Heart right ventricle (tissue), 16 donors: ENCODE measurements at regions of chr1 and their contacts with region 1.

Region 1: GRCh38 chr1:147833231-147833840 is 69.3 kb upstream of the GJA8 start:
- DNase-seq: no peak
- ATAC-seq: no peak
- H3K4me3 ChIP-seq: no peak overlapping the region
- H3K27ac ChIP-seq: no peak overlapping the region
- H3K4me1 ChIP-seq: no peaks in the 10 kb centered on the region
- H3K27me3 ChIP-seq: no peaks in the 10 kb centered on the region
- CTCF ChIP-seq: no peak

Region 2: GRCh38 chr1:147651213-147651865 is 182.0 kb before region 1 on chr1:
- intact Hi-C with region 1: no loop called
- DNase-seq: no peak
- ATAC-seq: no peak
- H3K4me3 ChIP-seq: no peak overlapping the region
- H3K27ac ChIP-seq: no peak overlapping the region
- H3K4me1 ChIP-seq: peaks cover 0 to 7% (median 0%) of the 10 kb centered on the region in 9 donors
- H3K27me3 ChIP-seq: no peaks in the 10 kb centered on the region
- CTCF ChIP-seq: no peak

Region 3: DNA sequence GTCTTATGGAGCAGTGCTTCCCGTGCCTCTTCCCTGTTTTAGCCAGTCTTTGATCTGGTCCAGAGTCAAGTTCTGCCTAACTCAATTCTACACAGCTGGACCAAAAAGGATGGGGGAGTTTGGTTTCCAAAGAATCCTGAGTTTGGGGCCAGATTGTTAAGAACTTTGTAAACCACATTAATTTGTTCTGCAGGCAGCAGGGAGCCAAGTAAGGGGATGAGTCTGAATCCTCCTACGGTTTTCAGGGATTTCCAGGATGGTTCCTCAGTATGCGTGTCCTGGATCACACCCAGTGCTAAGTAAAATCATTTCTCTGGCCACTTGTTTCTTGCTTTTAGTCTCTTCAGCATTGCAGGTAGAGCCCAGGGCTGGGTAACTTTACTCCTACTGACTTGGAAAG is 46.8 kb before region 1 on chr1:
- intact Hi-C with region 1: loop called in 1 of 10 experiments (anchors 5 kb)
- DNase-seq: no peak
- ATAC-seq: no peak
- H3K4me3 ChIP-seq: no peak overlapping the region
- H3K27ac ChIP-seq: no peak overlapping the region
- H3K4me1 ChIP-seq: peaks cover 0 to 13% (median 2%) of the 10 kb centered on the region in 9 donors
- H3K27me3 ChIP-seq: peaks cover 0 to 6% (median 0%) of the 10 kb centered on the region in 7 donors
- CTCF ChIP-seq: no peak

Region 4: DNA sequence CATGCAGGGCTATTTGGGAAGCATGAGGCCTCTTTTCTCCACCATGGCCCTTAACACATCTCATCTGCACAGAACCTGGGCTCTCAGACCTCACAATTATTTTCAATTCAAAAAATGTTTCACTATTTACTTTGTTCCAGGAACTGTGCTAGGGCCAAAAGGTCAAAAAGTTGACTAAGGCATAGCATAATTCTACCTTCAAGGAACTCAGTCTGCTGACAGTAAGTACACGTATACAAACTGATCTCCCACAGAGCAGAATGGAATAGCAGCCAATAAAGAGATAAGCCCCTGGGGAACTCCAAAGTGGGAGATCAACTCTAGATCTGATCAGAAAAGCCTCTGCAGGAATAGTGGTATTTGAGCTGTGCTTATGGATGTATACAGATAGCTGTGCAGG is 35.6 kb after region 1 on chr1:
- intact Hi-C with region 1: loop called in 1 of 10 experiments (anchors 2 kb)
- DNase-seq: no peak
- ATAC-seq: no peak
- H3K4me3 ChIP-seq: no peak overlapping the region
- H3K27ac ChIP-seq: no peak overlapping the region
- H3K4me1 ChIP-seq: no peaks in the 10 kb centered on the region
- H3K27me3 ChIP-seq: no peaks in the 10 kb centered on the region
- CTCF ChIP-seq: no peak